K562 (cell line): ENCODE measurements at regions of chr5 and their contacts with region 1.

Region 1: DNA sequence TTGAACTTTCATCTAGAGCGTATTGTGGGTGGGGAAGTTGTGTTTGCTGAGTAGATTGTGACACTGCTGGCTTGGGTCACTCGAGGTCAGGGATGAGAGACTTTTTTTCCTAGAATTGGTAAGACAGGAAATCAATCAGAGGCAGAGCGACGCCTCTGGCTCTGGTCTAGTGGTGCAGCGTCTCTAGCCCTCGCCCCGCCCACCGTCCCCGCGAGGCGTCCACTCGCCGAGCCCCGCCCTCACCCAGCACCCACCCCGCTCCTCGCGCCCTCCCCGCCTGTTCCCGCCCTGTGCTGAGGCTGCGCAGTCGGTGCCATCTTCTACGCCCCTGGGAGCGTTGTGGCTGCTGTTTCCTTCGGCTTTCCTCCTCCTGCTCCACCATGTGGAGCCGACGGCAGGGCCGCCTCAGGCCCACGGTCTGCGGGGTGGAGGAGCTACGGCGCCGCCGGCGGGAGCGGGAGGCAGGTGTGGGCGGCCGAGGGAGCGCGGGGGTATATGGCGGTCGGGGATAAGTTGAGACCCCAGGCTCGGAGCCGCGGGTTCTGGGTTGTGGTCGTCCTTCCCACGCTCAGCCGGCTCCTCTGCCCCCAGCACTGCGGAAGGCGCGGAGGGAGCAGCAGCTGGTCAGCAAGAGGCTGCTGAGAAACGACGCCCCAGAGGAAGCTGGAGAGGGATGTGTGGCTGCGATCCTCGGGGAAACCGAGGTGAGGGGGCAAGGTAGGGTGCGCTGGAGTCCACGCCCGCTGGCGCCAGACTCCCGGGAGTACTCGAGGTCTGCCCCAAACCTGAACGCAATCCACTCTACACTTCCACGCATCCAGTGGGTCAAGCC is at the start of gene TMCO6:
- DNase-seq: peak; percentile 98 to 99 (median 99)
- ATAC-seq: peak; percentile 95
- H3K4me3 ChIP-seq: peak within 1 kb of the TSS; percentile 54
- H3K27ac ChIP-seq: peak within 1 kb of the TSS; percentile 87
- H3K4me1 ChIP-seq: peaks cover 4 to 20% of the 10 kb centered on the region in 2 experiments; a peak in 4 of 5 replicates
- H3K27me3 ChIP-seq: no peaks in the 10 kb centered on the region; a peak in 1 of 5 replicates
- CTCF ChIP-seq: peak; percentile 64 to 78 (median 77)
- EP300 ChIP-seq: peak; percentile 81
- POLR2A ChIP-seq: peak; percentile 83
- RAD21 ChIP-seq: peak; percentile 50
- polyA plus RNA-seq, gene TMCO6: 3.4 to 5.1 TPM

Region 2: DNA sequence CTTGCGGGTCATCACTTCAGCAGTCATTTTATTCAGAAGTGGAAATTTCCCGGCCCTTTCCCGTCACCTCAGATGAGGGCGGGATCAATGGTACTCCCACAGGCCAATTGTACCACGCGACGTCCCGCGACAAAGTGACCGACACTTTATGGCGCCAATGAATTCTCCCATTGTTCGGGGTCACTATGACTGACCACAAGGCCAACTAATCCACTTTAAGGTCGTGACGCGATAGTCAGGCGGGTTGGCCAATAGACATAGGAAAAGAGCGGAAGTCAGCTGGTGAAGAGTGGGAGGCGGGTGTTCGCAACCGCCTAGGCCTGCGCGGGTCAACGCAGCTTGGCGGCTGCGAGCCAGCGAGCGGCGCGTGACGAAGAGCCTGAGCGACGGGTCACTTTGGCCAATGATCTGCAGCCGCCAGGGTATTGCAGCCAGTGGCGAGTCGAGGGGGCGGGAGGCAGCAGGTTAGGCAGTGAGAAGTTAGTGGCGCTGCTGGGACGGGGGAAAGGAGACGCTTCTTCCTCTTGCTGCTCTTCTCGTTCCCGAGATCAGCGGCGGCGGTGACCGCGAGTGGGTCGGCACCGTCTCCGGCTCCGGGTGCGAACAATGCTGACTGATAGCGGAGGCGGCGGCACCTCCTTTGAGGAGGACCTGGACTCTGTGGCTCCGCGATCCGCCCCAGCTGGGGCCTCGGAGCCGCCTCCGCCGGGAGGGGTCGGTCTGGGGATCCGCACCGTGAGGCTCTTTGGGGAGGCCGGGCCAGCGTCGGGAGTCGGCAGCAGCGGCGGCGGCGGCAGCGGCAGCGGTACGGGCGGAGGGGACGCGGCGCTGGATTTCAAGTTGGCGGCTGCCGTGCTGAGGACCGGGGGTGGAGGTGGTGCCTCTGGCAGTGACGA is 237.8 kb before region 1 on chr5 and contains the start of gene ANKHD1:
- CTCF ChIA-PET with region 1: no interaction called
- POLR2A ChIA-PET with region 1: interaction called, 3 read pairs
- in situ Hi-C with region 1: no loop called
- intact Hi-C with region 1: loop called (anchors 2 kb)
- DNase-seq: peak; percentile 91 to 100 (median 94)
- ATAC-seq: peak; percentile 83
- H3K4me3 ChIP-seq: peak within 1 kb of the TSS; percentile 100
- H3K27ac ChIP-seq: peak within 1 kb of the TSS; percentile 97
- H3K4me1 ChIP-seq: peaks cover 12 to 18% of the 10 kb centered on the region in 2 experiments; a peak in 4 of 5 replicates
- H3K27me3 ChIP-seq: no peaks in the 10 kb centered on the region
- CTCF ChIP-seq: peak in 1 of 3 experiments; percentile 15; a peak in 1 of 6 replicates
- EP300 ChIP-seq: no peak
- POLR2A ChIP-seq: peak; percentile 90
- RAD21 ChIP-seq: no peak; a peak in 1 of 4 replicates
- polyA plus RNA-seq, gene ANKHD1: 38.9 to 39.0 TPM

Region 3: GRCh38 chr5:140564196-140565023 is 75.0 kb before region 1 on chr5 and contains the starts of genes APBB3 and SLC35A4:
- CTCF ChIA-PET with region 1: no interaction called
- POLR2A ChIA-PET with region 1: interaction called, 3 read pairs
- in situ Hi-C with region 1: loop called (anchors 5 kb)
- intact Hi-C with region 1: loop called (anchors 1 kb)
- DNase-seq: peak; percentile 92 to 99 (median 94)
- ATAC-seq: peak; percentile 94
- H3K4me3 ChIP-seq: peak within 1 kb of the TSS; percentile 75
- H3K27ac ChIP-seq: peak within 1 kb of the TSS; percentile 98
- H3K4me1 ChIP-seq: peaks cover 26 to 40% of the 10 kb centered on the region in 2 experiments
- H3K27me3 ChIP-seq: no peaks in the 10 kb centered on the region
- CTCF ChIP-seq: 0 out of 6 replicates have a peak, but pooled peaks of 1 of the 3 experiments have one; percentile 12
- EP300 ChIP-seq: peak; percentile 58
- POLR2A ChIP-seq: peak; percentile 93
- RAD21 ChIP-seq: 0 out of 4 replicates have a peak, but pooled peaks of 1 of the 2 experiments have one; percentile 12
- polyA plus RNA-seq, gene APBB3: 0.17 to 0.67 TPM
- polyA plus RNA-seq, gene SLC35A4: 30.0 to 42.5 TPM

Region 4: GRCh38 chr5:140611020-140611521 is 28.3 kb before region 1 on chr5:
- CTCF ChIA-PET with region 1: no interaction called
- POLR2A ChIA-PET with region 1: interaction called, 3 read pairs
- in situ Hi-C with region 1: no loop called
- intact Hi-C with region 1: loop called (anchors 2 kb)
- DNase-seq: peak; percentile 57 to 90 (median 69)
- ATAC-seq: peak; percentile 94
- H3K4me3 ChIP-seq: no peak overlapping the region
- H3K27ac ChIP-seq: peak overlapping the region; percentile 9; the same call in 1 of the 3 replicates
- H3K4me1 ChIP-seq: peaks cover 7 to 8% of the 10 kb centered on the region in 2 experiments; a peak in 3 of 5 replicates
- H3K27me3 ChIP-seq: no peaks in the 10 kb centered on the region
- CTCF ChIP-seq: no peak
- EP300 ChIP-seq: peak; percentile 84
- POLR2A ChIP-seq: no peak
- RAD21 ChIP-seq: peak in 1 of 2 experiments; percentile 36; a peak in 2 of 4 replicates

Region 5: DNA sequence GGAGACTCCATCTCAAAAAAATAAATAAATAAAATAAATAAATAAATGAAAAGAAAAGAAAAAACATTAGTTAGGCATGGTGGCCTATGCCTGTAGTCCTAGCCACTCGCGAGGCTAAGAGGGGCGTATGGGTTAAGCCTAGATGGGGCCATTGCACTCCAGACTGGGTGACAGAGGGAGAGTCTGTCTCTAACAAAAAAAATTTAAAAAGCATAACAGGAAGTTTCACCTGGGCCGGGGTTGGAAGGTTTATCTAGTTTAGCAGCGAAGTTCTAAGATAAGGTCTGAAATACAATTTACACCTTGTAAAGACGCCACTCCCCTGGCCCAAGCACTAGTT is 78.8 kb after region 1 on chr5:
- CTCF ChIA-PET with region 1: no interaction called
- POLR2A ChIA-PET with region 1: interaction called, 5 read pairs
- in situ Hi-C with region 1: no loop called
- intact Hi-C with region 1: loop called (anchors 2 kb)
- DNase-seq: no peak
- ATAC-seq: peak; percentile 42
- H3K4me3 ChIP-seq: peak overlapping the region; percentile 42
- H3K27ac ChIP-seq: peak overlapping the region; percentile 95
- H3K4me1 ChIP-seq: peaks cover 0 to 2% of the 10 kb centered on the region in 2 experiments; a peak in 2 of 5 replicates
- H3K27me3 ChIP-seq: no peaks in the 10 kb centered on the region
- CTCF ChIP-seq: no peak
- EP300 ChIP-seq: no peak
- POLR2A ChIP-seq: no peak
- RAD21 ChIP-seq: no peak